Naive thymus-derived CD8-positive, alpha-beta T cell (primary cell): ENCODE measurements at regions of chr11 and their contacts with region 1.

Region 1: GRCh38 chr11:279966-280582 is 1.9 kb downstream of the NLRP6 start:
- DNase-seq: peak in 6 of 10 donors; percentile 44 to 83 (median 58)
- ATAC-seq: peak; percentile 51 to 65
- H3K4me3 Mint-ChIP-seq: peak overlapping the region; percentile 75 to 93 (median 89)
- H3K27ac Mint-ChIP-seq: peak overlapping the region in 7 of 10 donors; percentile 84 to 92 (median 88)
- H3K4me1 Mint-ChIP-seq: peaks cover 26 to 62% (median 53%) of the 10 kb centered on the region in 4 donors
- H3K27me3 Mint-ChIP-seq: peaks cover 0 to 14% (median 0%) of the 10 kb centered on the region in 5 donors

Region 2: GRCh38 chr11:299951-300735 is 20.1 kb after region 1 on chr11:
- POLR2A ChIA-PET with region 1: interaction called, 863 read pairs
- DNase-seq: peak in 5 of 10 donors; percentile 55 to 75 (median 57)
- ATAC-seq: peak; percentile 19 to 53
- H3K4me3 Mint-ChIP-seq: peak overlapping the region in 4 of 10 donors; percentile 12 to 48 (median 45)
- H3K27ac Mint-ChIP-seq: peak overlapping the region in 6 of 10 donors; percentile 38 to 81 (median 60)
- H3K4me1 Mint-ChIP-seq: peaks cover 18 to 62% (median 57%) of the 10 kb centered on the region in 4 donors
- H3K27me3 Mint-ChIP-seq: peaks cover 0 to 2% (median 0%) of the 10 kb centered on the region in 5 donors

Region 3: DNA sequence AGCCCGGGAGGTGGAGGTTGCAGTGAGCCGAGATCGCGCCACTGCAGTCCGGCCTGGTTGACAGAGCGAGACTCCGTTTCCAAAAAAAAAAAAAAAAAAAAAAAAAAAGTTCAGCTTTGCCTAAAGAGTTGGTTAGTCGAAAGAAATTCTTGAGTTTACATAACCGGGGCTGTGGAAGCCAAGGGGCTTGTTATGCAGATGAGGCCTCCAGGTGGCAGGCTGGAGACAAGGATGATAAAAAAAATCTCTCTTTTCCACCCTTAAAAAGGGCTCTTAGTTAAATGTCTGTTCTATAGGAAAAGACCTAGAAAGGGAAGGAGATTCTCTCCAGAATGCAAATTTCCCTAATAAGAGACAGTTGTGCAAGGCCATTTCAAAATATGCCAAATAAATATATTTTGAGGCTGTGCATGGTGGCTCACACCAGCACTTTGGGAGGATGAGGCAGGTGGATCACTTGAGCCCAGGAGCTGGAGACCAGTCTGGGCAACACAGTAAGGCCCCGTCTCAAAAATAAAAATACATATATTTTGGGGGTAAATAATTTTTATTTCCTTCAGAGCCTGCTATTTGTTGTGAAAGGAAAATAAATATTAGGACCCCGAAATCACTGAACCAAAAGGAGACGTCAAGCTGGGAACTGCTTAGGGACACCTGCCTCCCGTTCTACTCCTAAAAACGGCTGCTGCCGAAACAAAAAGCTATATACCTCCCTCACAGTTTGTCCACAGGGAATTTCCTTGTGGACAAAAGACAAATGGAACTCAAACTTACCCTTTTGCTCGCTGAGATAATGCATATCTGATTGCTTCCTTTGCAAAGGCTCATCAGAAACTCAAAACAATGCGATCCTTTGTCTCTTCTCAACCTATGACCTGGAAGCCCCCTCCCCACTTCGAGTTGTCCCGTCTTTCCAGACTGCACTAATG is 25.1 kb after region 1 on chr11:
- POLR2A ChIA-PET with region 1: interaction called, 28 read pairs
- DNase-seq: peak in 8 of 10 donors; percentile 59 to 86 (median 71)
- ATAC-seq: peak; percentile 11 to 30
- H3K4me3 Mint-ChIP-seq: peak overlapping the region in 7 of 10 donors; percentile 30 to 72 (median 36)
- H3K27ac Mint-ChIP-seq: peak overlapping the region; percentile 48 to 97 (median 88)
- H3K4me1 Mint-ChIP-seq: peaks cover 32 to 74% (median 63%) of the 10 kb centered on the region in 4 donors
- H3K27me3 Mint-ChIP-seq: peaks cover 0 to 2% (median 0%) of the 10 kb centered on the region in 5 donors

Region 4: GRCh38 chr11:313787-314547 is 33.9 kb after region 1 on chr11 and contains the start of gene IFITM1:
- POLR2A ChIA-PET with region 1: interaction called, 65 read pairs
- DNase-seq: peak in 9 of 10 donors; percentile 55 to 90 (median 82)
- ATAC-seq: peak; percentile 56 to 78
- H3K4me3 Mint-ChIP-seq: peak within 1 kb of the TSS; percentile 88 to 100 (median 97)
- H3K27ac Mint-ChIP-seq: peak within 1 kb of the TSS; percentile 94 to 99 (median 99)
- H3K4me1 Mint-ChIP-seq: peaks cover 30 to 50% (median 40%) of the 10 kb centered on the region in 4 donors
- H3K27me3 Mint-ChIP-seq: no peaks in the 10 kb centered on the region
- polyA plus RNA-seq, gene IFITM1: 1,833 to 2,198 (median 2,135) TPM

Region 5: GRCh38 chr11:406978-407739 is 127.1 kb after region 1 on chr11:
- POLR2A ChIA-PET with region 1: interaction called, 16 read pairs
- DNase-seq: peak; percentile 62 to 98 (median 95)
- ATAC-seq: peak; percentile 90 to 95
- H3K4me3 Mint-ChIP-seq: peak overlapping the region in 7 of 10 donors; percentile 22 to 76 (median 58)
- H3K27ac Mint-ChIP-seq: peak overlapping the region in 9 of 10 donors; percentile 43 to 93 (median 79)
- H3K4me1 Mint-ChIP-seq: peaks cover 7 to 31% (median 15%) of the 10 kb centered on the region in 4 donors
- H3K27me3 Mint-ChIP-seq: no peaks in the 10 kb centered on the region